Lower lobe of right lung (tissue), 2 donors: ENCODE measurements at regions of chr1 and their contacts with region 1.

Region 1: DNA sequence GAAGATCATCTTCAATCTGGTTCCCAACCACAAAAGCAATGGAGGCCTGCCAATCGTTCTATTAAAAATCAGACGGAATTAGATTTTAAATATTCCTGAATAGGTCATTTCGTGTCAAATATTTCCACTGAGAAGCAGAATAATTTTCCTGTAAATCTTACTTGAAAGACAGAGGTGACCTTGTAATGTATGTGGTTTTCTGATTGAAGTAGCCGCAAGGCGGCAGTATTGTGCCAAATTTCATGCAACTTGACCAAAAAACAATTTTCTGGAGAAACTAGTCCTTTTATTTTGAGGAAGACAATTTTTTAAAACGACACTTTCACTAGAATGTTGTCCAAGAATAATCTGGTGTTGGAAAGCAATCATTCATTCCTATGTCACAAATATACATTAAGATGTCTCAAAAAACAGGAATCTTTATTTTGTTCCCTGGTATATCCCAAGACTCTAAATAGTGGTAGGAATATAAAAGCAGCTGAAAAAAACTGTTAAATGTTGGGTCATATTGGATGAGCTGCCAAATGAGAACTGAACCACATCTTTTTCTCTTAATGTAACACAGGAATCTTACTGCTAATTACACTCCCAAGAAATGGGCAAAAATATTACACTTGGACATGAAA is 33.6 kb downstream of the SPAG17 start:
- DNase-seq: peak; percentile 51
- ATAC-seq: no peak
- H3K4me3 ChIP-seq: no peak overlapping the region
- H3K27ac ChIP-seq: no peak overlapping the region
- H3K4me1 ChIP-seq: no peaks in the 10 kb centered on the region
- H3K27me3 ChIP-seq: no peaks in the 10 kb centered on the region
- CTCF ChIP-seq: peak; percentile 61

Region 2: DNA sequence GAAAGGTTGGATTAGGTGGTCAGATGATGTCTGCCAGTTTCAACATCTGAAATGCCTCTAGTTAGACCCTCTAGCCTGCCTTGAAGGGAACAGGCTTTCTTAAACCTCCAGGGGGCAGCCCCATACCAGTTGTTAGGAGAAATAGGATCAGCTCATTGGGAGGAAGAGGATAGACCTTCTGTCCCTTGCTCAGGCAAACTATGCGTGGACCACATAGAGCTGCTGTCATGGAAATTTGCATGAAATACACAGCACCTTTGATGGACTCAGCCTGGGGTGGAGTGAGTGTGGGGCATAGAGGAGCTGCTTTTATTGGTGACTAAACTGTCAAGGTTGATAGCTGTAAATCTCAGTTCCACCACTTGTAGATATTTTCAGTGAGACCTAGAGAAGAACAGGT is 72.0 kb after region 1 on chr1:
- intact Hi-C with region 1: no loop called
- DNase-seq: no peak
- ATAC-seq: peak in 1 of 2 donors; percentile 54
- H3K4me3 ChIP-seq: no peak overlapping the region
- H3K27ac ChIP-seq: no peak overlapping the region
- H3K4me1 ChIP-seq: no peaks in the 10 kb centered on the region
- H3K27me3 ChIP-seq: no peaks in the 10 kb centered on the region
- CTCF ChIP-seq: peak; percentile 42

Region 3: DNA sequence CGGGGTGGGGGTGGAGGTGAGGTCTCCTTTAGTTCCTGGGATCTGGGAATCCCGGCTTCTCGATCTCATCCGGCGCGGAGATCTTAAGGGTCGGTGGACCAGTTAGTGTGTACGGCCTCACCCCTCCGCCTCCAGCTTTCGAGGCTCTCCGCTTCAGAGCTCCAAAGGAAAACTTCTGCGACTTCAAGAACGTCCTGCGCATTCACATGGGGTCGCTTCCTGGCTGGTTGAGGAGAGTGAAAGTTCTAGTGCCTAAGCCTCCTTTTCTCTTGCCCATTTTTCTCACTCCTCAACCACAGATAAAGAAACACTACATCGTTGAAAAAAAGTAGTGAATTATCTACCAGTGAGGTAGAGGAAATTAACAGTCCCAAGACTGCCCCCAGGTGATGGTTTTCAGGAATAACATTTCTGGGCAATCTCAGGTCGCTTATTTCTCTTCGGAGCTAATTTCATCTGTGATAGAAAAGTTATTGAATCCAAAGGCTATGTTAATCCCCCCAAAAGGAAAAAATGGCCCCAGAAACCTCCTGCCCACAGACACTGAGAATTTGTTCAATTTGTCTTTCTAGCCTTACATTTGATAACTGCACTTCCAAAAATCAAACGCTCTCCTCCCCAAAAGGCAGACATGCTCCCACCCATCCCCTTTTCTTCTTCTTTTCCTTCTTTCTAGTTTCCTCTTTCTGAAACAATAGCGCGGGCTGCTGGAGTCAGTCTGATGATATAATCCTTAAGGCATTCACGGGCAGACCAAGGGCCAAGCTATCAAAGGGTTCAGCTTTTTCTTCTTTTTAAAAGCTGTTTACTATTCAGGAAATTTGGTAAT is 857.3 kb after region 1 on chr1:
- intact Hi-C with region 1: loop called (anchors 5 kb)
- DNase-seq: no peak
- ATAC-seq: peak; percentile 58 to 80
- H3K4me3 ChIP-seq: peak overlapping the region; percentile 40
- H3K27ac ChIP-seq: no peak overlapping the region
- H3K4me1 ChIP-seq: peaks cover 29% of the 10 kb centered on the region
- H3K27me3 ChIP-seq: peaks cover 55% of the 10 kb centered on the region
- CTCF ChIP-seq: peak; percentile 59